Activated B cell treated with CpG ODN at 0.5 μM for 24 hours (primary cell): ENCODE measurements at regions of chr1 and their contacts with region 1.

Region 1: GRCh38 chr1:64268653-64269557 is 65.5 kb downstream of the UBE2U start:
- DNase-seq: no peak
- ATAC-seq: no peak
- H3K4me3 Mint-ChIP-seq: no peak overlapping the region
- H3K27ac Mint-ChIP-seq: no peak overlapping the region
- H3K4me1 Mint-ChIP-seq: no peaks in the 10 kb centered on the region
- H3K27me3 Mint-ChIP-seq: peaks cover 25% of the 10 kb centered on the region
- CTCF ChIP-seq: no peak

Region 2: DNA sequence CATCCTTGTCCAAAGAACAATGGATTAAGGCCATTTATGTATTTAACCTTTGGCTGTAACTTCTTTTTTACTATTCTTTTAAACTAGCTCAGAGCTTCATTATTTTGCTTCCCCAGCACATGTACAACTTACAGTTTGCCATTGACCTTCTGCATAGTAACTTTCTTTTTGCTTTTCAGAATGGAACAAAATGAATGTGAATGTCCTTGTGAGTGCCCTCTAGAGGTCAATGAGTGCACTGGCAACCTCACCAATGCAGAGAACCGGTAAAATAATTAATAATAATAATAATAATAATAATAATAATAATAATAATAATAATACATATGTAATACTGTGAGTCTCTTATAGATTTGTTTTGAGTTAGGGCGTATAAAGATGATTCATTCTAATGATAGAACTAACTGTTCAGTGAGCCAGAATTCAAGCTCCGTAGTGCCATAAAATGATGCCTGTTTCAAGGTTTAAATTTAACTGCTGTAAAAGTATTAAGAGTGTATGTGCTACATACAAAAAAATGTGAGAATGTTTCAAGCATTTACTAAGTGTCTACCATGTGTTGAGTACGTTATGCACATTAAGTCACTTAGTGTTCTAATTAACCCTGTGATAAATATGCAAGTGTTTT is 406.9 kb after region 1 on chr1:
- CTCF ChIA-PET with region 1: interaction called, 4 read pairs
- POLR2A ChIA-PET with region 1: no interaction called
- intact Hi-C with region 1: loop called (anchors 1 kb)
- DNase-seq: no peak
- ATAC-seq: no peak
- H3K4me3 Mint-ChIP-seq: no peak overlapping the region
- H3K27ac Mint-ChIP-seq: no peak overlapping the region
- H3K4me1 Mint-ChIP-seq: no peaks in the 10 kb centered on the region
- H3K27me3 Mint-ChIP-seq: peaks cover 5% of the 10 kb centered on the region
- CTCF ChIP-seq: peak; percentile 93

Region 3: DNA sequence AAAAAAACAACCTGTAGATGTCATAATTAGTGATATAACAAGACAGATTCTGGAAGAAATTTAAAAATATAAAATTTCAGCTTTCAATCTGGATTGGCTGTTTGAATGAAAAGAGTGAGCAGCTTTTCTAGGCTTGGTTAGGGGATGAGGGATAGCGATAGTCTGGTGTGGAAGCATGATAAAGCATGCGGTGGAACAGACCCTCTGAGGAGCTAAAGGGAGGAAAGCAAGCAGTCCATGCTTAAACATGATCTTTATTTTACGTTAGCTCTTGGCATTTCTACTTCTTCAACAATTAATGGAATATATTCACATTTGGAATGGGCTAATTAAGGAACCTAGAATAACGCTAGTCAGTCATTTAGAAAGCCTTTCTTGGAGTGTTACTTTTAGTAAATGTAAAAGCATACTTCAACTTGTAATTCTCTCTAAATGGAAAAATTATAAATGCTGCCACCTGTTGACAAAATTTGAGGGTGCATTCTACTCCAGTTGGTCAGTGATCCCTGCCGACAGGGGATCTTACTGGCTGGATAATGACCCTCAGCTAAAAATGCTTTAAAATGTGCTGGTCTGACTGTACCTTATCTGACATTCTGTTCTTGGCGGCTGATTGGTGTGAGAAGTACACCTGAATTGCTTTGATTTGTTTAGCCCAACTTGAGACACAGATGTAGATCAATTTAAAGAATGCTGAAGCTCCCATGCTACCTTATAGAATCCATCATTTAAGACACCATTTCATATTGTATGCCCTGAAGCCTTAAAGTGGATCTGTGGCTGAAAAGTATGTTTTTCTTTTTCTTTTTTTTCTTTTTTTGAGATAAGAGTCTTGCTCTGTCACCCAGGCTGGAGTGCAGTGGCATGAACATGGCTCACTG is 940.3 kb after region 1 on chr1:
- CTCF ChIA-PET with region 1: no interaction called
- POLR2A ChIA-PET with region 1: no interaction called
- intact Hi-C with region 1: loop called (anchors 5 kb)
- DNase-seq: no peak
- ATAC-seq: no peak
- H3K4me3 Mint-ChIP-seq: no peak overlapping the region
- H3K27ac Mint-ChIP-seq: no peak overlapping the region
- H3K4me1 Mint-ChIP-seq: peaks cover 5% of the 10 kb centered on the region
- H3K27me3 Mint-ChIP-seq: no peaks in the 10 kb centered on the region
- CTCF ChIP-seq: no peak

Region 4: GRCh38 chr1:65812065-65812464 is 1543.2 kb after region 1 on chr1:
- CTCF ChIA-PET with region 1: no interaction called
- POLR2A ChIA-PET with region 1: no interaction called
- intact Hi-C with region 1: no loop called
- DNase-seq: no peak
- ATAC-seq: peak; percentile 77
- H3K4me3 Mint-ChIP-seq: no peak overlapping the region
- H3K27ac Mint-ChIP-seq: no peak overlapping the region
- H3K4me1 Mint-ChIP-seq: peaks cover 4% of the 10 kb centered on the region
- H3K27me3 Mint-ChIP-seq: peaks cover 1% of the 10 kb centered on the region
- CTCF ChIP-seq: no peak